Stomach (tissue), 19 donors: ENCODE measurements at regions of chr7 and their contacts with region 1.

Region 1: DNA sequence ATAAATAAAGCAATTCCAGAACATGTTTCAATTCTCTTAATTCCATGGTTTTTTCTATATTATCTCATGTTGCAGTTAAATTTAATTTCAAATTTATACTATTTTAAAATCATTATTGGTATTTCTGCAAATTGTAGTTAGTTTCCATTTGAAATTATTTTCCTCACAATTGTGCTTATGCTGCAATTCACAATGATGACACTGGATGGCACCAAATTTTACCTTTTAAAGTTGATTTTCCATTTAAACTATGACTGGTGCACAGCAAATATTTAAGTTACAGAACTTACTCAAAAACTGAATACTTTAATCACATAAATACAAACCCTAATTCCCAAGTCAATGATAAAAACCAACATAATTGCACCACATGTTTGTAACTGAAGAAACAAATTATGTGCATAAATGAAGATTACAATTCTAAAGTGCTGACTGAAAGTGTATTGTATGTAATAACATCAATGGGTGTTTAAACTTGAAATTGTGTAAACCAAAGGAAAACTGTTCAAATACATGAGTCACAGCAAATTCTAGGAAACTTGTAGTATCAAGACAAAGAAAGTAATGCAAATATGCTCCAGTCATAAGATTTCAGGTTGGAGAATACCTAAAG is 75.3 kb upstream of the AASS start:
- DNase-seq: peak in 1 of 2 donors; percentile 54
- H3K4me3 ChIP-seq: no peak overlapping the region
- H3K27ac ChIP-seq: no peak overlapping the region
- H3K4me1 ChIP-seq: no peaks in the 10 kb centered on the region
- H3K27me3 ChIP-seq: no peaks in the 10 kb centered on the region
- CTCF ChIP-seq: peak in 5 of 7 experiments; percentile 42 to 53 (median 46)
- EP300 ChIP-seq: no peak
- POLR2A ChIP-seq: no peak

Region 2: GRCh38 chr7:121741896-121742295 is 477.5 kb before region 1 on chr7:
- intact Hi-C with region 1: no loop called
- DNase-seq: peak in 1 of 2 donors; percentile 22
- H3K4me3 ChIP-seq: no peak overlapping the region
- H3K27ac ChIP-seq: no peak overlapping the region
- H3K4me1 ChIP-seq: no peaks in the 10 kb centered on the region
- H3K27me3 ChIP-seq: no peaks in the 10 kb centered on the region
- CTCF ChIP-seq: no peak
- EP300 ChIP-seq: no peak
- POLR2A ChIP-seq: no peak

Region 3: GRCh38 chr7:122528879-122529481 is 309.6 kb after region 1 on chr7:
- intact Hi-C with region 1: loop called (anchors 10 kb)
- DNase-seq: peak in 1 of 2 donors; percentile 62
- H3K4me3 ChIP-seq: no peak overlapping the region
- H3K27ac ChIP-seq: no peak overlapping the region
- H3K4me1 ChIP-seq: no peaks in the 10 kb centered on the region
- H3K27me3 ChIP-seq: no peaks in the 10 kb centered on the region
- CTCF ChIP-seq: peak in 3 of 7 experiments; percentile 6 to 41 (median 38)
- EP300 ChIP-seq: no peak
- POLR2A ChIP-seq: no peak